A673 (cell line): ENCODE measurements at regions of chr9 and their contacts with region 1.

Region 1: DNA sequence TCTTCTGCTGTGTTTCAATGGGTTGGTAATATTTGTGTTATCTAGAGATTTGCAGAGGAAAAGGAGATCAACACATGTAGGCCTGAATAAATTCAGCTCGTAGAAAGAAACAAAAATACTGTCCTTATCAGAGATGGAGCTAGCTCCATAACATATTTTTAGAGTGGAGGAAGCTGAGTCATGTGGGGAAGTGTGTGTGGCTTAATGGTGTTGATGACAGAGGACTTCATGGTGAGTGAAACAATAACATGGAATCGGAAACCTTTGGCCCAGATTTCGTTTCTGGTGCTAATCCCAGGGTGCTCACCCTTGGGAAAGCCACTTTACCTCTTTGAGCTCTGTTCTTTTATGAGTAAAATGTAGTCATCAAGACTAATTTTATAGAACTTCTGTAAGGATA is 825.0 kb downstream of the TLR4 start:
- DNase-seq: peak; percentile 5
- H3K4me3 ChIP-seq: no peak overlapping the region
- H3K27ac ChIP-seq: no peak overlapping the region
- H3K4me1 ChIP-seq: no peaks in the 10 kb centered on the region
- H3K27me3 ChIP-seq: no peaks in the 10 kb centered on the region
- CTCF ChIP-seq: no peak

Region 2: DNA sequence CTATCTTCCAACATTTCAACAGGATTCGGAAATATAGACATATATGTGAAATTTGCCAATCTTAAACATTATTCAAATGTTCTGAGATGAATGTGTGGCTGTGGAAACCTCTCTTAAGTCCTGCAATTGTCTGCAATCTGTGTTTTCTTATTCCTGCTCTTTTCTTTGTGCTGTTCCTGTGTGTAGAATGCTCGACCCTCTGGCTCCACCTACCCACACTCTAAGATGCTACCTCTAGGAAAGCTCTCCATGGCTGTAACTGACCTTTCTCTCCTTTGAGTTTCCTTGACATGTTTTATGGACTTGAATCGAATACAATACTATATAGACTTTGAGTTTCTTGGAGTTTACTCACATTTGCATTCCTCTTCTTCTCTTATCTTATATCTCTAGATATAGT is 993.8 kb before region 1 on chr9:
- CTCF ChIA-PET with region 1: no interaction called
- POLR2A ChIA-PET with region 1: interaction called, 15 read pairs
- intact Hi-C with region 1: no loop called
- DNase-seq: no peak
- H3K4me3 ChIP-seq: no peak overlapping the region
- H3K27ac ChIP-seq: no peak overlapping the region
- H3K4me1 ChIP-seq: no peaks in the 10 kb centered on the region
- H3K27me3 ChIP-seq: no peaks in the 10 kb centered on the region
- CTCF ChIP-seq: no peak

Region 3: DNA sequence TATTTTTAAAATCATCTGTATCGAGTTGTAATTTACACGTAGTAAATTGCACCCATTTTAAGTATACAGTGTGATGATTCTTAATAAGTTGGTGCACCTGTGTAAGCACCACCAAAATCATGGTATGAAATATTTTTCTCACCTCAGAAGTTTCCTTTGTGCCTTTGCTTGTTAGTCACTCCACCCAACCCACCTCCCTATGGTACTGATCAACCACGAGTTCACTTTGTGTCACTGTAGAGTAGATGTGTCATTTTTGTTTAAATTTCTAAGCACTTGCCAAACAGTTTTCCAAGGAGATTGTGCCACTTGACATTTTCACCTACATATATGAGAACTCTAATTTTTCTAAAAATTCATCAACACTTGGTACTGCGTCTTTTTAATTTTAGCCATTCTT is 18.5 kb before region 1 on chr9:
- CTCF ChIA-PET with region 1: no interaction called
- POLR2A ChIA-PET with region 1: no interaction called
- intact Hi-C with region 1: no loop called
- DNase-seq: no peak
- H3K4me3 ChIP-seq: no peak overlapping the region
- H3K27ac ChIP-seq: no peak overlapping the region
- H3K4me1 ChIP-seq: no peaks in the 10 kb centered on the region
- H3K27me3 ChIP-seq: no peaks in the 10 kb centered on the region
- CTCF ChIP-seq: no peak

Region 4: GRCh38 chr9:119477197-119477596 is 948.0 kb after region 1 on chr9:
- CTCF ChIA-PET with region 1: no interaction called
- POLR2A ChIA-PET with region 1: no interaction called
- intact Hi-C with region 1: no loop called
- DNase-seq: no peak
- H3K4me3 ChIP-seq: no peak overlapping the region
- H3K27ac ChIP-seq: no peak overlapping the region
- H3K4me1 ChIP-seq: no peaks in the 10 kb centered on the region
- H3K27me3 ChIP-seq: no peaks in the 10 kb centered on the region
- CTCF ChIP-seq: no peak